ENCODE measurements at regions of chr2 and their contacts with region 1.

Region 1: GRCh38 chr2:47198985-47199451 is 43.9 kb upstream of the STPG4 start:
- DNase-seq: no peak
- ATAC-seq: no peak
- H3K4me3 ChIP-seq: no peak overlapping the region
- H3K4me3 Mint-ChIP-seq: no peak overlapping the region
- H3K27ac ChIP-seq: no peak overlapping the region
- H3K27ac Mint-ChIP-seq: no peak overlapping the region
- H3K4me1 ChIP-seq: no peaks in the 10 kb centered on the region
- H3K4me1 Mint-ChIP-seq: no peaks in the 10 kb centered on the region
- H3K27me3 ChIP-seq: no peaks in the 10 kb centered on the region
- H3K27me3 Mint-ChIP-seq: peaks cover 6% of the 10 kb centered on the region
- CTCF ChIP-seq: no peak

Region 2: GRCh38 chr2:47259829-47260228 is 60.8 kb after region 1 on chr2:
- CTCF ChIA-PET with region 1: no interaction called
- POLR2A ChIA-PET with region 1: no interaction called
- intact Hi-C with region 1: loop called in 1 of 2 experiments (anchors 5 kb)
- DNase-seq: no peak
- ATAC-seq: no peak
- H3K4me3 ChIP-seq: no peak overlapping the region
- H3K4me3 Mint-ChIP-seq: no peak overlapping the region
- H3K27ac ChIP-seq: no peak overlapping the region
- H3K27ac Mint-ChIP-seq: no peak overlapping the region
- H3K4me1 ChIP-seq: no peaks in the 10 kb centered on the region
- H3K4me1 Mint-ChIP-seq: no peaks in the 10 kb centered on the region
- H3K27me3 ChIP-seq: no peaks in the 10 kb centered on the region
- H3K27me3 Mint-ChIP-seq: no peaks in the 10 kb centered on the region
- CTCF ChIP-seq: no peak

Measured in CD8-positive, alpha-beta T cell (primary cell).